Mammary epithelial cell (primary cell): ENCODE measurements at regions of chrX and their contacts with region 1.

Region 1: DNA sequence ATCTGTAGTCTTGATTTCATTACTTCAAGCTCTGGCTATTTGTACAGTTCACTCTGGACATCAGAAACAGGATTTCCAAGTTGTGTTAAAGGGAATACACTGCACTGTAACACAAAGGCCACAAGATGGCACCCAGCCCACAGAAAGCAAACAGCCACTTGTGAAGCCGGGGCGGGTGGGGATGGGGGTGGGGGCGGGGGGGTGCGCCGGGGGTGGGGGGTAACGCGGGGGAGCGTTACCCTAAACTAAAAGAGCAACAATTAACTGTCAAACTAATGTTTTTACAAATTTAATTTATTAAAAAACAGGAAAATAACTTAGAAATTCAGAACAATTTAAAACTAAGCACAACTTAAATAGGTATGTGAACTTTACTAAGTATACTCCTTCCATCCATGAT is 27.3 kb downstream of the PRDX4 start:
- DNase-seq: peak; percentile 30
- H3K4me3 ChIP-seq: no peak overlapping the region
- H3K27ac ChIP-seq: no peak overlapping the region
- H3K4me1 ChIP-seq: no peaks in the 10 kb centered on the region
- H3K27me3 ChIP-seq: no peaks in the 10 kb centered on the region
- CTCF ChIP-seq: peak; percentile 53 to 61

Region 2: GRCh38 chrX:23114159-23114558 is 580.4 kb before region 1 on chrX:
- CTCF ChIA-PET with region 1: no interaction called
- dilution Hi-C with region 1: no loop called
- in situ Hi-C with region 1: no loop called
- intact Hi-C with region 1: no loop called
- DNase-seq: no peak
- H3K4me3 ChIP-seq: no peak overlapping the region
- H3K27ac ChIP-seq: no peak overlapping the region
- H3K4me1 ChIP-seq: no peaks in the 10 kb centered on the region
- H3K27me3 ChIP-seq: no peaks in the 10 kb centered on the region
- CTCF ChIP-seq: no peak

Region 3: GRCh38 chrX:23742697-23743622 is 48.4 kb after region 1 on chrX and contains the start of gene ACOT9:
- CTCF ChIA-PET with region 1: no interaction called
- dilution Hi-C with region 1: no loop called
- in situ Hi-C with region 1: no loop called
- intact Hi-C with region 1: loop called (anchors 2 kb)
- DNase-seq: peak; percentile 81
- H3K4me3 ChIP-seq: peak within 1 kb of the TSS; percentile 56 to 88 (median 72)
- H3K27ac ChIP-seq: peak within 1 kb of the TSS; percentile 94
- H3K4me1 ChIP-seq: no peaks in the 10 kb centered on the region
- H3K27me3 ChIP-seq: no peaks in the 10 kb centered on the region
- CTCF ChIP-seq: no peak
- total RNA-seq, gene ACOT9: 57.8 to 74.1 TPM